ENCODE measurements at regions of chr1 and their contacts with region 1.

Region 1: DNA sequence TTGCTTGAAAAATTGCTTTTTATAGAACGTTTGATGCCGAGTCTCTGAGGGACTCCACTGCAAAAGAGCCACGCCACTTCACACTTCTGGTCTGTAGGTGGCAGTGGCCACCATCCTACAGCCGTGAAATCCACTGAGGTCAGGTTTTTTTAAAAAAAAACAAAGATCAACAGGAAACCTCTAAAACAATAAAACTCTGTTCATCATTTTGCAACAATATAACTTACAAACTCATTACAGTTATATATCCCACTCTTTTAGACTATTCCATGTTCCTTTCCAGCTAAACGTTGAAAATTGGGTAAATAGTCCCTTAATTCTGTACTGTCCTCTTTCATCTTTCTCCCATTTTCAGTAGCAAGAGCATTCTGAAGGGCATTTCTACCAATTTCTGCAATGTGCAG is 64.6 kb upstream of the FMN2 start:
- DNase-seq: no peak
- ATAC-seq: no peak
- H3K4me3 ChIP-seq: no peak overlapping the region
- H3K27ac ChIP-seq: no peak overlapping the region
- H3K4me1 ChIP-seq: no peaks in the 10 kb centered on the region
- H3K27me3 ChIP-seq: peaks cover 0 to 8% (median 0%) of the 10 kb centered on the region in 9 donors
- CTCF ChIP-seq: peak; percentile 61 to 84 (median 75)
- POLR2A ChIP-seq: no peak

Region 2: DNA sequence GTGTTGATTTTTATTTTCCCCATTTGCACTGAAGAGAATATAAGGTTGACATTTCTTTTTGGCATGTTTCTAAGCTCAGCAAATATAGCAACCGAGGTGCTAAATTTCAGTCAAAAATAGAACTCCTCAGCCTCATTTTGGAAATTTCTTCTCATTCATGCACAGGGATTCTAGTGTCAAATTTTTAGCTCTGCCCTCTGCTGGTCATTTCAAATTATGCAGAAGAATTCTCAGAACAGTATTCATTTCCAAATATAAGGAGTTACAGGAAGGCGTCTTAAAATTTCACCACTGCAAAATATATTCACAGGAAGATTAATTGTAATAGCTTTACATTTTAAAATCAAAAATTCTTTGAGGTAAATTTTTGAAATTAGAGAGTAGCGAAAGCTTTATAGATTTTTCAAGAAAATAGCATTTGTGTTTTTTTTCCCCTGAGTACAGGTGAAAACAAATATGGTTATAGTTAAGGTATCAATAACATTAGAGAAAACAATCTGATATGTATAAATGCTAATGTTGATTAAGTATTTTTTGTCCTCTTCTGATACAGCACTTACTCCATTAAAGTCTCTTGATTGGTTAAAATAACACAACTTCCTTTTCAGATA is 122.5 kb after region 1 on chr1:
- intact Hi-C with region 1: loop called (anchors 1 to 10 kb)
- DNase-seq: no peak
- ATAC-seq: no peak
- H3K4me3 ChIP-seq: no peak overlapping the region
- H3K27ac ChIP-seq: no peak overlapping the region
- H3K4me1 ChIP-seq: no peaks in the 10 kb centered on the region
- H3K27me3 ChIP-seq: no peaks in the 10 kb centered on the region
- CTCF ChIP-seq: peak in 11 of 12 donors; percentile 49 to 76 (median 63)
- POLR2A ChIP-seq: no peak